Activated CD8-positive, alpha-beta memory T cell treated with anti-CD3 and anti-CD28 coated beads, Interleukin-2, amount 10 ng/mL, durations not matched to agents 7 days and 5 days (primary cell): ENCODE measurements at regions of chr12 and their contacts with region 1.

Region 1: DNA sequence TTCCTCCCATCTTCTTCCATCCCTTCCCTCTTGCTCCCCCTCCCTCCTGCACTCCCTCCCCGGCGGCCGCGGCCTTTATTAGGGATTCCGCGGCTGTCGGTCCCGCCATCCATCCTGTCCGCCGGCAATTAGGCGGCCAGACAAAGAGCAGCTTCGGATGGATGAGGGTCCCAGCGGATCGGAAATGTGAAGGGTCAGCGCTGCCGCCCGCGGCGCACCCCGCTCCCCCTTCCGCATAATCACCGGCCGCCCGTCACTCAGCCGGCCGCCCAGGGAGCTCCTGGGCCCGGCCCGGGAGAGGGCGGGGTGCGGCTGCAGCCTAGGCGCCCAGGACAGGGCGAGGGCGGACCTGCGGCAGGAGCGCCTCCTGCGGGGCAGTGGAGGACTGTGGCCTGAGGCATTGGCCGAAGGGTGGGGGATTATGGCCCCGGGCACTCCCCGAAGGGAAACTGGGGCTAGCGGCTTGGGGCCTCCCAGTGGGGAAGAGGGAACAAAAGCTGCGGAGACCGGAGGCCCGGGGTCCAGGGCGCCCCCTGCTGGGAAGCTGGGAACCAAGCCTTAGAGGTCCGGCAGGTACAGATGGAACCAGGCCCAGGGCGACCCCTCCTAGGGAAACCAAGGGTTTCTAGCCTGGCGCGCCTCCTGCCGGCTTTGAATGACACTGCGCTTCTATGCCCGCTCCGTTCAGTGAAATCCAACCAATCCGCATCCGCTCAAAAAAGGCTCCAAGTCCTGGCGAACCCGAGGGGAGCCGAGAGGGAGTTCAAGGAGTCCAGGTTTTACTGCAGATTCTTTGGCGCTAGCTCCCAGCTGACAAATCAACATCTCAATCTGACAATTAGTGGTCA is 4.4 kb upstream of the DNAJC22 start:
- DNase-seq: peak; percentile 85
- ATAC-seq: peak; percentile 80
- H3K4me3 Mint-ChIP-seq: no peak overlapping the region
- H3K27ac Mint-ChIP-seq: no peak overlapping the region
- H3K4me1 Mint-ChIP-seq: peaks cover 34% of the 10 kb centered on the region
- H3K27me3 Mint-ChIP-seq: peaks cover 86% of the 10 kb centered on the region

Region 2: DNA sequence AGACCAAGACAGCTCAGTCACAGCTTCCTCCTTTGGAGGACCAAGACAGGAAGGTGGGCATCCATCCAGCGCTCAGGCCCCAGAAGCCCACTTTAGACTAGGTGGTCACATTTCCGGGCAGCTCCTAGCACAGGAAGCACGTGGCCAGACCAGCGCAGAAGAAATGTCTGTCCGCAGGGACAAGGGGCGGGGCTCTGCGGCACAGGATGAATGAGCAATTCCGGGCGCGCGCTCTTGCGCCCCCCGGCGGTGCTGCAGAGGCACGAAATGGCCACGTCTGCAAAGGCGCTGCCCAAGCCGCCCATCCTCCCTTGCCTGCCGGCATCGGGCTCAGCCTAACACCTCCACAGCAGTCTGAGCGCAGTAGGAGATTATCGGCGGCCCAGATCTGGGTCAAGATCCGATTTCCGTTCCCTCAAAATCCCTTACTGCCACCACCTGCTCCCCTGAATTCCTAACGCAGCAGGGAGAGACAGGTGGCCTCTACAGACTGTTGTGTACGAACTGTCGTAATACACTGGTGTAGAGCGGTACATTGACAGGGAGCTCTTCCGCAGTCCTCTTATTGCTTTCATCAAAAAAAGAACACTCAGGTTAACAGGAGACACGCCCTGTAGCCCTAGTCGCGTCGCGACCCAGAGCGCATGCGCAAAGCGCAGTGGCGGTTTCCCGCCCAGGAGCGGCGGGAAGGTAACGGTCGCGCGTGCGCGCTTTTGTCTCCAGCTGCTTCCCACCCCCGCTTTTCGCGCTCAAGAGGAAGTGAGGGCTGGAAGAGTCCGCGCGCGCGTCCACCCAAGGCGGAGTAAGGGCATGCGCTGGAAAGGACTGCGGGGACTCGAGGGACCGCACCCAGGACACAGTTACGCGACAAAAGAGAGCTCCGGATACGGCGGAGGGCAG is 211.9 kb before region 1 on chr12:
- CTCF ChIA-PET with region 1: no interaction called
- DNase-seq: peak; percentile 95
- ATAC-seq: peak; percentile 63
- H3K4me3 Mint-ChIP-seq: peak overlapping the region; percentile 84
- H3K27ac Mint-ChIP-seq: peak overlapping the region; percentile 99
- H3K4me1 Mint-ChIP-seq: peaks cover 51% of the 10 kb centered on the region
- H3K27me3 Mint-ChIP-seq: peaks cover 6% of the 10 kb centered on the region

Region 3: GRCh38 chr12:49264738-49265515 is 77.4 kb before region 1 on chr12 and contains the start of gene TUBA1C:
- CTCF ChIA-PET with region 1: interaction called, 12 read pairs
- DNase-seq: peak; percentile 93
- ATAC-seq: peak; percentile 88
- H3K4me3 Mint-ChIP-seq: peak within 1 kb of the TSS; percentile 94
- H3K27ac Mint-ChIP-seq: peak within 1 kb of the TSS; percentile 97
- H3K4me1 Mint-ChIP-seq: peaks cover 48% of the 10 kb centered on the region
- H3K27me3 Mint-ChIP-seq: no peaks in the 10 kb centered on the region
- total RNA-seq, gene TUBA1C: 264 to 266 TPM

Region 4: DNA sequence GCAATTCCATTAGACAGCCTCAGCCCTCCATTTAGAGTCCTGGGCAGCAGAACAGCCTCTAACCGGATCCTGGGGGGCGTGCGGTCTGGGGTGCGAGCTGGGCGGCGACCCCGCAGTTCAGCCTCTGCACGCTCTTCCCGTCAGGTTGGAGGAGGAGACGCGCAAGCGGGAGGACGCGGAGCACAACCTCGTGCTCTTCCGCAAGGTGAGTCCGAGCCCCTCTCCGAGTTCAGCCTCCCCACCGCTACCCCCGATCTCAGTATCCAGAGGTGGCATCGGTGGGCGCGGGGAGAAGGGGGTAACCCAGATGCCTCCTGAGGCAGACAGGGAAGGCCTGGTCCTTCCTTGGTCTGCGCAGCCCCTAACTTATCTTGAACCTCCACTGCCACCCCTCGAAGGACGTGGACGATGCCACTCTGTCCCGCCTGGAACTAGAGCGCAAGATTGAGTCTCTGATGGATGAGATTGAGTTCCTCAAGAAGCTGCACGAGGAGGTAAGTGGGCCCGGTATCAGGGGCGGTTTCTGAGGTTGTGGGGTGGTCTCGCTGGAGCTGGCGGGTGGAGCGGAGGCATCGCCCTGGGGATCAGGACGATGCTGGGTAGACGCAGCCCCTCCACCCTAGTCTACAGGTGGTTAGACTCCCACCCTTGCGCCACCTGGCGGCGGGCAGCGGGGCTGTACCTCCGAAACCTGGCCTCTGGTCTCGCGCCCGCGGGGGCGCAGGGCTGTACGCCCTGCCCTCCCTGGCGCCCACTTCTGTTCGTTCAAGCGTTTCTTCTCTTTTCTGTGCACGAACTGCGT is 46.1 kb before region 1 on chr12:
- CTCF ChIA-PET with region 1: interaction called, 202 read pairs
- DNase-seq: peak; percentile 77
- ATAC-seq: peak; percentile 71
- H3K4me3 Mint-ChIP-seq: peak overlapping the region; percentile 67
- H3K27ac Mint-ChIP-seq: no peak overlapping the region
- H3K4me1 Mint-ChIP-seq: peaks cover 20% of the 10 kb centered on the region
- H3K27me3 Mint-ChIP-seq: peaks cover 63% of the 10 kb centered on the region

Region 5: DNA sequence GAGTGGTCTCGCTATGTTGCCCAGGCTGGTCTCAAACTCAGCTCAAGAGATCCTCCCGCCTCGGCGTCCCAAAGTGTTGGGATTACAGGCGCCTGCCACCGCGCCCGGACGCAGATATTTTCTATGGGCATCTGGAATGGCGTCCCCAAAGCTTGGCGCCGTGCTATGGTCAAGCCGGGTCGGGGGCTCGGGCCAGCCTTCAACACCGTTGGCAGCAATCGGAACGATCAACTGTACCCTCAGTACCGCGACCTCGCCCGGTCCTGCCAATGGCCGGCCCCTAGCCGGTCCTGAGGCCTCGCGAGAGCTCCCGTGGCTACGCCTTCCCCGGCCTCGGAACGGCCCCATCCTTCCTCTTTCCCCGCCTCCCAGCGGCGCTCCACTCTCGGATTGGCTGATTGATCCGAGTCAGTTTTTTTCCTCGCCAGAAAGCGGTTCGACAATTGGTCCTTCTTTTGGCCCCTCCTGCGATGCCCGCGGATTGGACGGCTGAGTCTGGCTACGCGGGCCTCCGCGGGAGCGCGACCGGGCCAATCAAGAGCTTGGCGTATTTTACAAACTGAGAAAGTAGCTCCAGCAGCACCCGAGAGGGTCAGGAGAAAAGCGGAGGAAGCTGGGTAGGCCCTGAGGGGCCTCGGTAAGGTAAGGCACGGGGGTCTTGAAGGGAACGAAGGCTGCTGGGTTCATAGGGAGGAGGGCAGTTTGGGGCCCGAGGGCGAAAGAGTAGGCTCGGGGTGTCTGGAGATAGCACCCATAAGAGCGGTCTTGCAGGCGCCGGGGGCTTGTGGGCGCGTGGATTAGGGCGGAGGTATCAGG is 19.4 kb before region 1 on chr12 and contains the start of gene TROAP:
- CTCF ChIA-PET with region 1: interaction called, 45 read pairs
- DNase-seq: peak; percentile 99
- ATAC-seq: peak; percentile 98
- H3K4me3 Mint-ChIP-seq: peak within 1 kb of the TSS; percentile 97
- H3K27ac Mint-ChIP-seq: peak within 1 kb of the TSS; percentile 98
- H3K4me1 Mint-ChIP-seq: peaks cover 28% of the 10 kb centered on the region
- H3K27me3 Mint-ChIP-seq: no peaks in the 10 kb centered on the region
- total RNA-seq, gene TROAP: 89.5 to 107 TPM

Region 6: DNA sequence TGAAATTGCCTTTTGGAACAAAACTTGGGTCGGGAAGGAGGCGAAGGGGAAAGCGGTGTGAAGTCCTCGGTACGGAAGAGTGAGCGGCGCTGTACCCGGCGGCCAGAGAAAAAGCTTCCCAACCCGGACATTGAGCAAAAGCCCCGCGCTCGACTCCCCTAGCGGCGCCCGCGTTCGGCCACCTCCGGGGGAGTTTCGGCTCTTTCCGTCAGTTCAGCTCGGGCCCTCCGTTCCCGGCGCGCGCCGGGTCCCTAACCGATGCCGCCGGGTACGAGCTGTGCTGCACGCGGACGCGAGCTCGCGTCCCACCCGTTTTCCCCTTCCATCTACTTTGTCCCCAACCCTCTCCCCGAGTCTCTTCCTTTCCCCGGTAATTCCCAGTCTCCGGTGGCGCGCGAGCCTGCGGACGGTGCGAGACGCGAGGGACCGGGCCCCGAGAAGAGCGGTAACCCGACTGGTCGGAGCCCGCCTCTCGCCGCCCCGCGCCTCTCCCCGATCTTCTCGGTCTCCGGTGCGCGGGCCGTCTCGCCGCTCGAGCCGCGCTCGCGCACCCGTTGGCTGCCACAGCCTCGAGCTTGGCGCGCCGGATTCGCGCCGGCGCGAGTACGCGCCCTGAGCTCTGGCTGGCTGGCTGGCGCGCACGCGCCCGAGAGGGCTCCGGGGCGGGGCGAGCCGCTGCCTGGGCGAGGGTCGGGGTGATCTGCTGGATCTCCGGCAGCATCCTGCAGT is 24.5 kb after region 1 on chr12:
- CTCF ChIA-PET with region 1: interaction called, 33 read pairs
- DNase-seq: peak; percentile 94
- ATAC-seq: peak; percentile 88
- H3K4me3 Mint-ChIP-seq: peak overlapping the region; percentile 95
- H3K27ac Mint-ChIP-seq: peak overlapping the region; percentile 98
- H3K4me1 Mint-ChIP-seq: peaks cover 35% of the 10 kb centered on the region
- H3K27me3 Mint-ChIP-seq: no peaks in the 10 kb centered on the region

Region 7: DNA sequence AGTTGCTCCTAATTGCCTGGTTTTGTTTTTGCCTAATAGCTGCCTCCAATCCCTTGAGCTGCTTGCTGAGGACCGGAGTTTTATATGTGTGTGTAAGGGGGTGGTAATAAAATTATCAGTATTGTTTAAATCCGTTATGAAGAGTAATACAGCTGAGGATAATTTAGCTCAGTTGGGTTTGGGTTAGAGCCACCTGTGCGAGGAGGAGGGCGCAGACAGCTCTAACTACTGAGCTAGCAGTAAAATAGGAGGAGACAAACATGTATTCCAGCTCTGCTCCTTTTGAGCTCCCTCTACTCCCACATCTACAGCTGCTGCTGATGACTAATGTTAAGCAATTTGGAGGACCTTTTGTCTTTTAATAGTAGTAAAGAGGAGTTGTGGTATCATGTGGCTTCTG is 86.5 kb after region 1 on chr12:
- CTCF ChIA-PET with region 1: no interaction called
- DNase-seq: no peak
- ATAC-seq: no peak
- H3K4me3 Mint-ChIP-seq: no peak overlapping the region
- H3K27ac Mint-ChIP-seq: no peak overlapping the region
- H3K4me1 Mint-ChIP-seq: peaks cover 2% of the 10 kb centered on the region
- H3K27me3 Mint-ChIP-seq: no peaks in the 10 kb centered on the region